ENCODE measurements at regions of chr18 and their contacts with region 1.

Region 1: GRCh38 chr18:64037812-64038414 is 68.0 kb downstream of the SERPINB8 start:
- DNase-seq: no peak
- H3K4me3 ChIP-seq: no peak overlapping the region
- H3K27ac ChIP-seq: no peak overlapping the region
- H3K27me3 ChIP-seq: peaks cover 0 to 4% (median 0%) of the 10 kb centered on the region in 45 donors
- CTCF ChIP-seq: peak; percentile 53 to 84 (median 69)

Region 2: GRCh38 chr18:64539847-64540246 is 501.9 kb after region 1 on chr18:
- intact Hi-C with region 1: no loop called
- DNase-seq: no peak
- H3K4me3 ChIP-seq: no peak overlapping the region
- H3K27ac ChIP-seq: no peak overlapping the region
- H3K27me3 ChIP-seq: no peaks in the 10 kb centered on the region
- CTCF ChIP-seq: no peak

Region 3: DNA sequence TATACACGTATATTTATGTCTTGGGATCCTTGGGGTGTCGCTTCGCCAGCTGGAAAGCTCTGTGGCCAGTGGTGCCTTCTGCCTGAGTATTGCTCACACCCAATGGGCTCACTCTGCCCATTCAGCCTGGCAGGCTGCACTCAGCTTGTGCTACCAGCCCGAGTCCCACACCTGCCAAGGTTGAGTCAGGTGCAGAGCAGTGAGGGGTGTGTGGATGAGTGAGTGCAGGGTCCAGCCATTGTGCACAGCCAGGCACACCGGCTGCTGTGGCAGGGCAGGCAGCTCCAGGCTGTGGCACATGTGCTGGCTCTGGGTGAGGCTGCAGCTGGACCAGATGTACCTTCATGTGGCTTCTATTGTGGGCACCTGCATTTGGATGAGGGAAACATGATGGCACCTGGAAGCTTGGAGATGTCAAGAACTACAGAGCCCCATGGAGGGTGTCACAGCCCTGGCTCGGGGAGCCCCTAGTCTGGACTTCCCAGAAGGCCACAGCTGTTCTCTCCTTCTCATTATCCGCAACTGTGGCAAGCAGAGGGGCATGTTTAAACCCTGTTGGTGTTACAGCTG is 607.9 kb after region 1 on chr18:
- intact Hi-C with region 1: no loop called
- DNase-seq: no peak
- H3K4me3 ChIP-seq: no peak overlapping the region
- H3K27ac ChIP-seq: no peak overlapping the region
- H3K27me3 ChIP-seq: no peaks in the 10 kb centered on the region
- CTCF ChIP-seq: no peak

Region 4: GRCh38 chr18:65753520-65753919 is 1715.6 kb after region 1 on chr18:
- intact Hi-C with region 1: loop called in 1 of 2 experiments (anchors 10 kb)
- DNase-seq: peak in 8 of 10 donors; percentile 17 to 70 (median 48)
- H3K4me3 ChIP-seq: peak overlapping the region in 13 of 59 donors; percentile 2 to 85 (median 69)
- H3K27ac ChIP-seq: peak overlapping the region in 2 of 59 donors; percentile 14 to 40
- H3K27me3 ChIP-seq: peaks cover 0 to 19% (median 0%) of the 10 kb centered on the region in 45 donors
- CTCF ChIP-seq: peak in 55 of 56 donors; percentile 30 to 74 (median 61)

Measured in dorsolateral prefrontal cortex (tissue), 120 donors.